ENCODE measurements at regions of chr2 and their contacts with region 1.

Region 1: DNA sequence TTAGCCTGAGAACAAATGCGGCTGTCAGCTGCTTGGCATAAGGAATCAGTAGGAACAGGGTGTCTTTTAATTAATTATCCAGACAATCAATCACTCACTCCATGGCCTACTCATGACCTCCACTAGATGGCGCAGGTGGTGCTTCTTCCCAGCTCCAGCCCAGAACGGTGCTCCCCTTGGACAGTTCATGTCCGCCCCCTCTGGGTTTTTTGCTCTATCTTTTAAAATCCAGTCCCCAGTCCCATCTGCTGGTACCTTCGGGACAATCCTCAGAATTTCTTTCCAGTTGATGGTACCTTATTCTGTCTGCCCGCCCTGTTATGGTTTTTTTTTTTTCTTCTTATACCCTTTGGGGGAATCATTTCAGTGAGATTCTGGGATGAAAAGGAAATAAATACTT is 99.8 kb downstream of the CACNB4 start:
- DNase-seq: no peak
- H3K4me3 ChIP-seq: no peak overlapping the region
- CTCF ChIP-seq: peak; percentile 77

Region 2: GRCh38 chr2:152012697-152013096 is 13.6 kb after region 1 on chr2:
- CTCF ChIA-PET with region 1: interaction called, 23 read pairs
- POLR2A ChIA-PET with region 1: no interaction called
- DNase-seq: no peak
- H3K4me3 ChIP-seq: no peak overlapping the region
- CTCF ChIP-seq: no peak

Measured in AG04449 (cell line).